PC-3 (cell line): ENCODE measurements at regions of chr14 and their contacts with region 1.

Region 1: DNA sequence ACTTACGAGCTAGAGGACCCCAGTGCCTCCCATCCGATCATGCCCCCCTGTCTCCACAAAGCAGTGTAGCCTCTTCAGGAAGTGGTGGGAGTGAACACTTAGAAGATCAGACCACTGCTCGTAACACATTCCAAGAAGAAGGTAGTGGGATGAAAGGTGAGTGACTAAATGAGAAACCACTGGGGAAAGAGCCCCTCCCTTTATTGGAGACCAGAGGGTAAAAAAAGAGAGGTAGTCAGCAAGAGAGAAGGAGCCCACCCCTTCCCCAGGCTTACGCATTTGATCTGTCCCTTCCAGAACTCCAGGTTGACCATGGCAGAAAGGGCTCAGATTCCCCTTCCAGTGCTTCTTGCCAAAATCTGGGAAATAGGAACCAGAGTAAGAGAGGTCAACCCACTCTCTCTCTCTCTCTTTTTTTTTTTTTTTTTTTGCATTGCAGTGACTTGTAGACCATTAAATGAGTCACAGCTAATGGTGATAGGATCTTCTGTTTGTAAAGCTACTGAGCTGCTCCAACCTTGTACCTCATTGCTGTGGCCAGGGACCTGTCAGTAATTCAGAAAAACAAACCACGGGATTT is 165.4 kb downstream of the GCH1 start:
- DNase-seq: peak; percentile 94
- ATAC-seq: peak; percentile 81
- H3K4me3 ChIP-seq: peak overlapping the region; percentile 50
- H3K27ac ChIP-seq: peak overlapping the region; percentile 91
- H3K4me1 ChIP-seq: peaks cover 37% of the 10 kb centered on the region
- H3K27me3 ChIP-seq: no peaks in the 10 kb centered on the region
- CTCF ChIP-seq: no peak

Region 2: GRCh38 chr14:54683882-54684794 is 53.1 kb before region 1 on chr14:
- CTCF ChIA-PET with region 1: interaction called, 23 read pairs
- POLR2A ChIA-PET with region 1: no interaction called
- intact Hi-C with region 1: no loop called
- DNase-seq: peak; percentile 65
- ATAC-seq: peak; percentile 61
- H3K4me3 ChIP-seq: no peak overlapping the region
- H3K27ac ChIP-seq: peak overlapping the region; percentile 31
- H3K4me1 ChIP-seq: peaks cover 38% of the 10 kb centered on the region
- H3K27me3 ChIP-seq: no peaks in the 10 kb centered on the region
- CTCF ChIP-seq: no peak

Region 3: GRCh38 chr14:54691525-54692283 is 45.5 kb before region 1 on chr14:
- CTCF ChIA-PET with region 1: no interaction called
- POLR2A ChIA-PET with region 1: no interaction called
- intact Hi-C with region 1: loop called (anchors 5 kb)
- DNase-seq: peak; percentile 97
- ATAC-seq: peak; percentile 98
- H3K4me3 ChIP-seq: no peak overlapping the region
- H3K27ac ChIP-seq: peak overlapping the region; percentile 3; the same call in 1 of the 2 replicates
- H3K4me1 ChIP-seq: peaks cover 5% of the 10 kb centered on the region
- H3K27me3 ChIP-seq: no peaks in the 10 kb centered on the region
- CTCF ChIP-seq: peak; percentile 100

Region 4: GRCh38 chr14:54762296-54762695 is 25.1 kb after region 1 on chr14:
- CTCF ChIA-PET with region 1: no interaction called
- POLR2A ChIA-PET with region 1: interaction called, 14 read pairs
- intact Hi-C with region 1: no loop called
- DNase-seq: no peak
- ATAC-seq: no peak; the same call in 1 of the 2 replicates
- H3K4me3 ChIP-seq: no peak overlapping the region
- H3K27ac ChIP-seq: no peak overlapping the region
- H3K4me1 ChIP-seq: no peaks in the 10 kb centered on the region
- H3K27me3 ChIP-seq: no peaks in the 10 kb centered on the region
- CTCF ChIP-seq: no peak

Region 5: DNA sequence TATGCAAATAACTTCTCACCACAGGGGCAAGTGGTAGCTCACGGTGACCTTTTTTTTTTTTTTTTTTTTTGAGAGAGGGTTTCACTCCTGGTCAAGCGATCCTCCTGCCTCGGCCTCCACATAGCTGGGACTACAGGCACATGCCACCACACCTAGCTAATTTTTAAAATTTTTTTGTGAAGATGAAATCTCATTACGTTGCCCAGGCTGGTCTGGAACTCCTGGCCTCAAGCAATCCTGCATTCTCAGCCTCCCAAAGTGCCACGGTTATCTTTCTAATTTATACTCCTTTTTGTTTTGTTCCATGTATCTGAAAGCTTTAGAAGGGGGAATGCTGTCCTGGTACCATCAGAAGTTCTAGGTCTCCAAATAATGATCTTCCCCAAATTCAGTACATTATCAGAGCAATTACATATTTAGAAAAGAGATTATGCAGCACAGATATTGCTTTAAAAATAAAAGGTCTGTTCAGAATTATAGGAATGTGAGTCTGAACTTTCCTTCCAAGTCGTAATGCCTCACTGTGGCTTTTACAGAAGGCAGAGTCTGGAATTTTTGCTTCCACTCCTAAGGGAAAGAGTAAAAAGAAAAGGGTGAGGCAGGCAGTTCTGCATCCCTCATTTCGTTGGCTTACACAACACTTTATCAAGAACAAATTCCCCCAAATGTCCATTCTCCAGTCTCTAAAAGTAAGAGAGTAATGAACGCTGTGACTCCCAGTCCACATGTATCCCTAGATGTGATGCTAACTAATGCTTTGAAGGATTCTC is 92.4 kb after region 1 on chr14:
- CTCF ChIA-PET with region 1: no interaction called
- POLR2A ChIA-PET with region 1: no interaction called
- intact Hi-C with region 1: no loop called
- DNase-seq: no peak
- ATAC-seq: no peak
- H3K4me3 ChIP-seq: no peak overlapping the region
- H3K27ac ChIP-seq: no peak overlapping the region
- H3K4me1 ChIP-seq: no peaks in the 10 kb centered on the region
- H3K27me3 ChIP-seq: no peaks in the 10 kb centered on the region
- CTCF ChIP-seq: no peak